Gastrocnemius medialis (tissue), 4 donors: ENCODE measurements at regions of chr20 and their contacts with region 1.

Region 1: GRCh38 chr20:10316582-10316981 is 98.0 kb downstream of the SNAP25 start:
- DNase-seq: no peak
- ATAC-seq: no peak
- H3K4me3 ChIP-seq: no peak overlapping the region
- H3K27ac ChIP-seq: no peak overlapping the region
- H3K4me1 ChIP-seq: no peaks in the 10 kb centered on the region
- H3K27me3 ChIP-seq: no peaks in the 10 kb centered on the region
- CTCF ChIP-seq: peak in 3 of 5 experiments; percentile 14 to 47 (median 36)
- POLR2A ChIP-seq: no peak

Region 2: DNA sequence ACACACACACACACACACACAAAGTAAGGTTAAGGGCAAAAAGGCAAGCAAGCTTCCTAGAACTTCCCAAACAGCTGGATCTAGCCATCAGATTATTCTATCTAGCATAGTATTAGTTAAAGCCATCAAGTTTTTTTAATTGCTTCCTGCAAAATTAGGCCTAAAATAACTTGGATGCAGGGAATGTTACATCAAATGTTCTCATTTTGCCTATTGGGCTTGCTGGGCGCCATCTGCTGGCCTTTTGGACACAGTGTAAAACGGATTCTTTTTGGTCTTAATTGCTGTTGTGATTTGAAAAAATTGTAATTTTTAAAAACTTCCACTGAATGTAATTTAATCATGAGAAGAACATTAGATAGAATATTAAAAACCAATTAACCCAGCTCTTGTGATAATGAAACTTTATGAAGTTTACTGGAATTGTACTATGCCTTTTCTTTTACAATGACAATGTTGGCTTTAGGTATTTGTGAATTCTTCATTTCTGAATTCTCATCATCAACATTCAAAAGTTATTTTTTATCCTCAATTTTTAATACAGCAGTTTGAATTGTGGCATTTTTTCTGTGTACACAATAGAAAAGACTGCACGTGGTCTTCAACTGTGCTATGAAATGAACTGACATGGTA is 110.6 kb after region 1 on chr20:
- in situ Hi-C with region 1: no loop called
- intact Hi-C with region 1: loop called (anchors 5 kb)
- DNase-seq: no peak
- ATAC-seq: no peak
- H3K4me3 ChIP-seq: no peak overlapping the region
- H3K27ac ChIP-seq: no peak overlapping the region
- H3K4me1 ChIP-seq: peaks cover 37 to 51% of the 10 kb centered on the region in 2 donors
- H3K27me3 ChIP-seq: no peaks in the 10 kb centered on the region
- CTCF ChIP-seq: peak; percentile 27 to 78 (median 51)
- POLR2A ChIP-seq: no peak